CD4-positive, alpha-beta T cell (primary cell): ENCODE measurements at regions of chr6 and their contacts with region 1.

Region 1: DNA sequence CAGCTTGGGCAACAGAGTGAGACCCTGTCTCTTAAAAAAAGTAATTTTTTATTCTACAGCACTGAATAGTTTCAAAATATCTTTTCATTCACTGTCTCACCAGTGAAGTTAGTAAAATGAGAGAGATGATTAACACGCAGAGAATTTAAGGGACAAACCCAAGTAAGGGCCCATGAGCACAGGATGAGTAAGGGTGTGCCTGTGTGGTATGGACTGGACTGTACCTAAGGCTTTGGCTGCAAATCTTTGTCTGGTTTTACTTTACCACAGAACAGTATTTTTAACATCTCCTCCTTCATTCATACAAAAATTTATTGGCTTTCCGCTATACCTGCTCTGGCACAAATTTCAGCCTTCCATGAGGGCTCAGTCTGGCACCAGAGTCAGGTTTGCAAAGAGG is 433.3 kb downstream of the UTRN start:
- DNase-seq: no peak
- ATAC-seq: no peak
- H3K4me3 ChIP-seq: no peak overlapping the region
- H3K4me3 Mint-ChIP-seq: no peak overlapping the region
- H3K27ac ChIP-seq: no peak overlapping the region
- H3K27ac Mint-ChIP-seq: no peak overlapping the region
- H3K4me1 ChIP-seq: no peaks in the 10 kb centered on the region
- H3K4me1 Mint-ChIP-seq: no peaks in the 10 kb centered on the region
- H3K27me3 ChIP-seq: no peaks in the 10 kb centered on the region
- H3K27me3 Mint-ChIP-seq: no peaks in the 10 kb centered on the region
- CTCF ChIP-seq: no peak

Region 2: GRCh38 chr6:144675231-144675861 is 43.1 kb before region 1 on chr6:
- CTCF ChIA-PET with region 1: no interaction called
- POLR2A ChIA-PET with region 1: no interaction called
- intact Hi-C with region 1: loop called in 1 of 2 experiments (anchors 1 kb)
- DNase-seq: peak in 5 of 14 experiments; percentile 5 to 43 (median 26)
- ATAC-seq: peak; percentile 34
- H3K4me3 ChIP-seq: no peak overlapping the region
- H3K4me3 Mint-ChIP-seq: peak overlapping the region; percentile 17
- H3K27ac ChIP-seq: no peak overlapping the region
- H3K27ac Mint-ChIP-seq: peak overlapping the region; percentile 29
- H3K4me1 ChIP-seq: peaks cover 11% of the 10 kb centered on the region
- H3K4me1 Mint-ChIP-seq: peaks cover 42% of the 10 kb centered on the region
- H3K27me3 ChIP-seq: no peaks in the 10 kb centered on the region
- H3K27me3 Mint-ChIP-seq: no peaks in the 10 kb centered on the region
- CTCF ChIP-seq: no peak

Region 3: GRCh38 chr6:144953552-144954240 is 235.3 kb after region 1 on chr6:
- CTCF ChIA-PET with region 1: no interaction called
- POLR2A ChIA-PET with region 1: no interaction called
- intact Hi-C with region 1: no loop called
- DNase-seq: no peak
- ATAC-seq: no peak
- H3K4me3 ChIP-seq: no peak overlapping the region
- H3K4me3 Mint-ChIP-seq: no peak overlapping the region
- H3K27ac ChIP-seq: no peak overlapping the region
- H3K27ac Mint-ChIP-seq: no peak overlapping the region
- H3K4me1 ChIP-seq: no peaks in the 10 kb centered on the region
- H3K4me1 Mint-ChIP-seq: no peaks in the 10 kb centered on the region
- H3K27me3 ChIP-seq: no peaks in the 10 kb centered on the region
- H3K27me3 Mint-ChIP-seq: no peaks in the 10 kb centered on the region
- CTCF ChIP-seq: no peak